ENCODE measurements at regions of chrX and their contacts with region 1.

Region 1: DNA sequence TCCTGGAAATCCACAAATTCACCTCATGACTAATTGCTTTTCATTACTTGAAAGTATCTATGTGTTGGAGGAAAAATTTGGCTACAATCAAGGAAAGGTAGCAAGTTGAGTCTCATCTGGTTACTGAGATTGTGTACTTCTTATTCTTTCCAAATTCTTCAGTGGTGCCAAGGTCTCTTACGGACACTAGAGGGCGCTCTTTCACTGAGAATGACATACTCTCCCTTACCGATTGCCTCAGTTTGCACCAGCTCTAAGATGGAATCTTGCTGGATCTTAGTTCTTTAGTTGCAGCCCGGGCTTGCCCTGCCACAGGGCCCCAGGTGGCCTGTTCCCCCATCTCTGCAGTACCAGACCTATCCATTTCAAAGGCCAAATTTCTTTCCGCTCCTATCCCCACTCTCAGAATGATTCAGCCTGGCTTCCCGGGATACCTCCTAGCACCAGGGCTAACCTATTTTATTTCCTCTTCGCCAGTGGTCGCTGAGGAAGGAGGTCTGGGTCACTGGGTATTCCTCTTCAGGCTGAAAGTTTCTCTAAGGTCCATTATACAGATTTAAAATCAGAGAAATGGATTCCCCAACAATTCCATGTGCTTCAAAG is 24.6 kb upstream of the GPR50 start:
- DNase-seq: no peak
- ATAC-seq: no peak

Region 2: DNA sequence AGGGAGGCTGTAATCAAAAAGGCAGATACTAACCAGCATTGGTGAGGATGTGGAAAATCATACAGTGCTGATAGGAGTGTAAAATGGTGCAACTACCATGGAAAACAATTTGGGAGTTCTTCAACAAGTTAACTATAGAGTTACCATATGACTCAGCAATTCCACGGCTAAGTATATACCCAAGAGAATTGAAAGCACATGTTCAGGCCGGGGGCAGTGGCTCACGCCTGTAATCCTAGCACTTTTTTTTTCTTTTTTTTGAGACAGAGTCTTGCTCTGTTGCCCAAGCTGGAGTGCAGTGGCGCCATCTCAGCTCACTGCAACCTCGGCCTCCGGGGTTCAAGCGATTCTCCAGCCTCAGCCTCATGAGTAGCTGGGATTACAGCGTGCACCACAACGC is 238.3 kb before region 1 on chrX:
- intact Hi-C with region 1: no loop called
- DNase-seq: no peak
- ATAC-seq: no peak

Region 3: GRCh38 chrX:150934453-150934852 is 217.3 kb before region 1 on chrX:
- intact Hi-C with region 1: no loop called
- DNase-seq: no peak
- ATAC-seq: peak; percentile 41

Region 4: GRCh38 chrX:151680805-151681204 is 529.0 kb after region 1 on chrX:
- intact Hi-C with region 1: loop called (anchors 2 kb)
- DNase-seq: no peak
- ATAC-seq: peak; percentile 61

Region 5: GRCh38 chrX:152632445-152633097 is 1480.8 kb after region 1 on chrX:
- intact Hi-C with region 1: loop called (anchors 10 kb)
- DNase-seq: no peak
- ATAC-seq: no peak

Measured in Right ventricle myocardium superior (tissue), 1 donor.